ENCODE measurements at regions of chr17 and their contacts with region 1.

Region 1: GRCh38 chr17:37212179-37212578 is 163.6 kb upstream of the C17orf78 start:
- DNase-seq: no peak
- ATAC-seq: no peak
- H3K4me3 ChIP-seq: no peak overlapping the region
- H3K27ac ChIP-seq: no peak overlapping the region
- H3K4me1 ChIP-seq: no peaks in the 10 kb centered on the region
- H3K27me3 ChIP-seq: no peaks in the 10 kb centered on the region
- CTCF ChIP-seq: peak; percentile 13; the same call in 1 of the 2 replicates

Region 2: DNA sequence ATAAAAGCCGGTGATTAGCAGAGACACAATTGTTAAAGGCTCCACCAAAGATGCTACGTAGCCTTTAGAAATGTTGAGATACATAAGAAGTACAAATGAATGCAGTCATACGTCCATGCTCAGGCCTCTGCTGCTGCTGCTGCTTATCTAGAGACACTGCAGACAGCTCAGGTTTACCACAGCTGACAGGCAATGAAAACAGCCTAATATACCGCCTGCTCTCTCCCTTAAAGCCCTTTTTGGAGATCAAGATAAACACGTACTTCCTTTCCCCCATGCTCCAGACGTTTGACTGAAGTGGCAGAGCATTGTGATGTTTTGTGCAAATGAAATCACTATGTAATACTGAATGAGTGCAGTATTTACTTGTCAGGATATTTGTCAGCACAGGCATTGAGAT is 78.1 kb before region 1 on chr17:
- CTCF ChIA-PET with region 1: no interaction called
- POLR2A ChIA-PET with region 1: interaction called, 14 read pairs
- in situ Hi-C with region 1: no loop called
- intact Hi-C with region 1: no loop called
- DNase-seq: no peak
- ATAC-seq: no peak
- H3K4me3 ChIP-seq: no peak overlapping the region
- H3K27ac ChIP-seq: no peak overlapping the region
- H3K4me1 ChIP-seq: no peaks in the 10 kb centered on the region
- H3K27me3 ChIP-seq: no peaks in the 10 kb centered on the region
- CTCF ChIP-seq: no peak

Region 3: GRCh38 chr17:37274461-37274860 is 62.3 kb after region 1 on chr17:
- CTCF ChIA-PET with region 1: interaction called, 13 read pairs
- POLR2A ChIA-PET with region 1: no interaction called
- in situ Hi-C with region 1: no loop called
- intact Hi-C with region 1: no loop called
- DNase-seq: no peak
- ATAC-seq: no peak
- H3K4me3 ChIP-seq: no peak overlapping the region
- H3K27ac ChIP-seq: no peak overlapping the region
- H3K4me1 ChIP-seq: no peaks in the 10 kb centered on the region; the same call in 1 of the 2 replicates
- H3K27me3 ChIP-seq: no peaks in the 10 kb centered on the region
- CTCF ChIP-seq: no peak